CD8-positive, alpha-beta T cell (primary cell): ENCODE measurements at regions of chr11 and their contacts with region 1.

Region 1: DNA sequence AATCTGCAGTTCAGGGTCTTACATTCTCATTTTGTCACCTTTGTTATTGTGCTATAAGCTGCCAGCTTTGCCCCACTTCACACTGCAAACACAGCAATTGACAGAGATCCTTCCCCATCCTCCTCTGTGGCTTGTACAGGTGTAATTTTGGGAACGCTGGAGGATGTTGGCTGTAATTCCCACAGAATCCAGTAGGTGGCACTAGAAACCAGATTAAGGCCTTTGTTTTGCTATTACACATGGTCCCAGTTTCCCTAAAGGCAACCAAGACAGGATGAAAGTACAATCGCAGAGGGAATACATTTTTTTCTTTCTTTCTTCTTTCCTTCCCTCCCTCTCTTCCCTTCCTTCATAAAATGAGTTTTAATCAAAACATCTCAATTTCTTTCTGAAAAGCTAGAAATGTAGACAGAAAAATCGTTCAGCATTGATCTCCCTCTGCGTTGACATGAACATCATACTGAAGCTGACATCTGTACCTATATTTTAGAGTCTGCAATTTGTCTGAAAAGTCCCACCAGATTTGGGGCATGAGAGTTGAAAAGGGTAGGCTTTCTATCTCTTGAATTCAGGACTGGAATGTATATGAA is 21.3 kb upstream of the NELL1 start:
- DNase-seq: peak in 6 of 9 experiments; percentile 12 to 47 (median 28)
- ATAC-seq: no peak
- H3K4me3 ChIP-seq: no peak overlapping the region
- H3K4me3 Mint-ChIP-seq: no peak overlapping the region
- H3K27ac ChIP-seq: no peak overlapping the region
- H3K27ac Mint-ChIP-seq: no peak overlapping the region
- H3K4me1 ChIP-seq: no peaks in the 10 kb centered on the region
- H3K4me1 Mint-ChIP-seq: no peaks in the 10 kb centered on the region
- H3K27me3 ChIP-seq: no peaks in the 10 kb centered on the region
- H3K27me3 Mint-ChIP-seq: peaks cover 10% of the 10 kb centered on the region
- CTCF ChIP-seq: peak; percentile 92

Region 2: DNA sequence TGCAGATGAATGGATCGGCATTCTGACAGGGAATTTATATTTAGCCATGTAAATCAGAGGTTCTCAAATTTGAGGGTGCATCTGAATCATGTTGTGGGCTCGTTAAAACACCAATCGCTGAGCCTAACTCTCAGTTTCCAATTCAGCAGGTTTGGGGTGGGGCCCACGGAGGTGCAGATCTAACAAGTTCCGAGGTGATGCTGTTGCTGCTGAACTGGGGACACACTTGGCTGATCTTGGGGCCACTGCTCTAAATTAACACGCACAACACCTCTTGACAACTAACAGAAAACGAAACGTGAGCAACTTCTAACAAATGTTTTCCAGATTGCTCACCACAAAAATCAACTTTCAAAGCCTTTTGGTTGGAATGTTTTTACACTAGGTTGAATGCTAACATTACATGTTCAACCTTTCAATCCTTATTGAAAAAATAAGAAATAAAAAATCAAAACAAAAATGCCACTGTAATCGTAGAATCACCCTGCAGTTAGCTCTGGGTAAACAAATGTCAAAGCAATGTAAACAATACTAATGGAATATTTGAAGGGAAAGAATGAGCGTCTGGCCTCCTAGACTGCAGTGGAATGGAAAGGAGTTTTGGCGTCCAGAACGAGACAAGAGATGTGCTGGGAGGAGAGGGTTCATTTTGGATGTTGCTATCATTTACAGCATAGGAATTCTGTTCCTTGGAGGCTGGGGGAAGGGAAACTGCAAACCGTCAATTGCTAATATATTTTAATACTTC is 117.0 kb before region 1 on chr11:
- CTCF ChIA-PET with region 1: no interaction called
- POLR2A ChIA-PET with region 1: no interaction called
- intact Hi-C with region 1: no loop called
- DNase-seq: no peak
- ATAC-seq: no peak
- H3K4me3 ChIP-seq: no peak overlapping the region
- H3K4me3 Mint-ChIP-seq: no peak overlapping the region
- H3K27ac ChIP-seq: no peak overlapping the region
- H3K27ac Mint-ChIP-seq: no peak overlapping the region
- H3K4me1 ChIP-seq: no peaks in the 10 kb centered on the region
- H3K4me1 Mint-ChIP-seq: no peaks in the 10 kb centered on the region
- H3K27me3 ChIP-seq: no peaks in the 10 kb centered on the region
- H3K27me3 Mint-ChIP-seq: peaks cover 8% of the 10 kb centered on the region
- CTCF ChIP-seq: no peak

Region 3: GRCh38 chr11:20584093-20584774 is 63.8 kb before region 1 on chr11:
- CTCF ChIA-PET with region 1: no interaction called
- POLR2A ChIA-PET with region 1: no interaction called
- intact Hi-C with region 1: no loop called
- DNase-seq: no peak
- ATAC-seq: no peak
- H3K4me3 ChIP-seq: no peak overlapping the region
- H3K4me3 Mint-ChIP-seq: no peak overlapping the region
- H3K27ac ChIP-seq: no peak overlapping the region
- H3K27ac Mint-ChIP-seq: no peak overlapping the region
- H3K4me1 ChIP-seq: no peaks in the 10 kb centered on the region
- H3K4me1 Mint-ChIP-seq: peaks cover 2% of the 10 kb centered on the region
- H3K27me3 ChIP-seq: no peaks in the 10 kb centered on the region
- H3K27me3 Mint-ChIP-seq: peaks cover 7% of the 10 kb centered on the region
- CTCF ChIP-seq: no peak

Region 4: DNA sequence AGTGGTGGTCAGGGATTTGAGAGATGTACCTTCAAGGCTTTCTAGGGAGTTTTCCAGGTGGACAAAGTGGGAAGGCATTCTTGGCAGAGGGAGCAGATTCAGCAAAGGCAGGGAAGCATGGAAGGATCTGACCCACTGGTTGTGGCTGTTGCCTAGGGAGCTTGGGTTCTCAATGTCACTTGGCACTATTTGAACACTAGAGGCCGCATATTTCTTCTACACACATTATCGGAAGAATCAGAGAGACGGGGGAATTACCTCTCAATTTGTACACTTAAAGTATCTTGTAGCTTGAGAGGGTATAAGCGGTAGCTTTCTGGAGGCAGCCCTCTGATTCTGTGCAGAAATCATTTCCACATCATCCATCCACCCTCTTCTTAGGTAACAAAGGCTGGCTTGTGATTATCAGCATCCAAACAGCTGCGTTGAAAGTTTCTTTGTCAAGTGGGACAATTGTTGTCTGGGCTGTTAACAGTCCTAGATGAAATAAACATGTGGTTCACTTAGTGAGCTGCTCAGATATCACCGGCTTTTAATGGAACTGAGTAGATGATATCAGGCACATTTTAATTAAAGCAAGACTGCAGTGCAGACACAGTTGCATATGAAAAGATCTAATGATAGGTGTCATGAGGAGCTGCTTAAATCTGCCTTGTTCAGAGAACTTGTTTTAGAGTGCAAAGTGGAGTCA is 23.9 kb after region 1 on chr11:
- CTCF ChIA-PET with region 1: interaction called, 12 read pairs
- POLR2A ChIA-PET with region 1: no interaction called
- intact Hi-C with region 1: no loop called
- DNase-seq: no peak
- ATAC-seq: no peak
- H3K4me3 ChIP-seq: no peak overlapping the region
- H3K4me3 Mint-ChIP-seq: no peak overlapping the region
- H3K27ac ChIP-seq: no peak overlapping the region
- H3K27ac Mint-ChIP-seq: no peak overlapping the region
- H3K4me1 ChIP-seq: peaks cover 3% of the 10 kb centered on the region
- H3K4me1 Mint-ChIP-seq: peaks cover 9% of the 10 kb centered on the region
- H3K27me3 ChIP-seq: peaks cover 0 to 4% of the 10 kb centered on the region in 2 experiments
- H3K27me3 Mint-ChIP-seq: peaks cover 68% of the 10 kb centered on the region
- CTCF ChIP-seq: no peak

Region 5: DNA sequence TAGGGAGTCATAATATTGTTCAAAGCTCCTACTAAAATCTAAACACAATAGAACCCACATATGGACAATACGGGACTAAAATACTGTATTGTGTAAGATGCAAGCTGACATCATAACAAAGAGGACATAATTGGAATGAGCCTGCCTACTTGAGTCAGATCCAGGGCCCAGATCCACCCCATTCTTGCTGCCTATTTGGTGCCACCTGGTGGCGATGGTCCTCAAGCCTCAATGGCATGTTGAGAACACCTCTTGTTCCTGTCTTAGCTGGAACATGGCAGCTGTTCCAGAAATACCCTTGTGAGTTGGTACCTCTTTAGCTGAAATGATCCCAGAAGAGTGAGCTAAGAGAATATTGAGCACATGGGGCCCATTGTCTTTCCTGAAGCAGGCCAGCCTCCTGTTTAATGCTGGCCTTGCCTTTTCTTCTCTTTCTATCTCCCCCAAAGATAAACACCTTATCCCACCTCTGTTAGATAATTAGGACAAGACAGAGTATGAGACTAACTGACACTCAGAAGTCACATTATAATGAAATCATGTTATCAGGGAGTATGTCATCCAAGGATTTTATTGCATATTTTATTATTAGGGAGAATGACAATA is 863.9 kb after region 1 on chr11:
- CTCF ChIA-PET with region 1: no interaction called
- POLR2A ChIA-PET with region 1: no interaction called
- intact Hi-C with region 1: loop called in 1 of 2 experiments (anchors 5 kb)
- DNase-seq: peak in 3 of 9 experiments; percentile 6 to 14 (median 12)
- ATAC-seq: no peak
- H3K4me3 ChIP-seq: no peak overlapping the region
- H3K4me3 Mint-ChIP-seq: no peak overlapping the region
- H3K27ac ChIP-seq: no peak overlapping the region
- H3K27ac Mint-ChIP-seq: no peak overlapping the region
- H3K4me1 ChIP-seq: no peaks in the 10 kb centered on the region
- H3K4me1 Mint-ChIP-seq: no peaks in the 10 kb centered on the region
- H3K27me3 ChIP-seq: no peaks in the 10 kb centered on the region
- H3K27me3 Mint-ChIP-seq: no peaks in the 10 kb centered on the region
- CTCF ChIP-seq: no peak

Region 6: GRCh38 chr11:22304337-22304961 is 1656.4 kb after region 1 on chr11:
- CTCF ChIA-PET with region 1: interaction called, 7 read pairs
- POLR2A ChIA-PET with region 1: no interaction called
- intact Hi-C with region 1: loop called in 1 of 2 experiments (anchors 2 kb)
- DNase-seq: peak in 2 of 9 experiments; percentile 14 to 34
- ATAC-seq: peak; percentile 36
- H3K4me3 ChIP-seq: no peak overlapping the region
- H3K4me3 Mint-ChIP-seq: no peak overlapping the region
- H3K27ac ChIP-seq: no peak overlapping the region
- H3K27ac Mint-ChIP-seq: no peak overlapping the region
- H3K4me1 ChIP-seq: no peaks in the 10 kb centered on the region
- H3K4me1 Mint-ChIP-seq: no peaks in the 10 kb centered on the region
- H3K27me3 ChIP-seq: no peaks in the 10 kb centered on the region
- H3K27me3 Mint-ChIP-seq: peaks cover 6% of the 10 kb centered on the region
- CTCF ChIP-seq: peak; percentile 75